B cell (primary cell): ENCODE measurements at regions of chr2 and their contacts with region 1.

Region 1: GRCh38 chr2:176653479-176654443 is 384.5 kb downstream of the MTX2 start:
- DNase-seq: peak; percentile 45
- ATAC-seq: peak; percentile 31
- H3K4me3 ChIP-seq: no peak overlapping the region
- H3K4me3 Mint-ChIP-seq: no peak overlapping the region
- H3K27ac ChIP-seq: no peak overlapping the region
- H3K27ac Mint-ChIP-seq: no peak overlapping the region
- H3K4me1 ChIP-seq: peaks cover 0 to 3% of the 10 kb centered on the region in 2 donors
- H3K4me1 Mint-ChIP-seq: peaks cover 3% of the 10 kb centered on the region
- H3K27me3 ChIP-seq: peaks cover 0 to 7% (median 3%) of the 10 kb centered on the region in 4 experiments
- H3K27me3 Mint-ChIP-seq: peaks cover 42% of the 10 kb centered on the region
- CTCF ChIP-seq: peak; percentile 51

Region 2: DNA sequence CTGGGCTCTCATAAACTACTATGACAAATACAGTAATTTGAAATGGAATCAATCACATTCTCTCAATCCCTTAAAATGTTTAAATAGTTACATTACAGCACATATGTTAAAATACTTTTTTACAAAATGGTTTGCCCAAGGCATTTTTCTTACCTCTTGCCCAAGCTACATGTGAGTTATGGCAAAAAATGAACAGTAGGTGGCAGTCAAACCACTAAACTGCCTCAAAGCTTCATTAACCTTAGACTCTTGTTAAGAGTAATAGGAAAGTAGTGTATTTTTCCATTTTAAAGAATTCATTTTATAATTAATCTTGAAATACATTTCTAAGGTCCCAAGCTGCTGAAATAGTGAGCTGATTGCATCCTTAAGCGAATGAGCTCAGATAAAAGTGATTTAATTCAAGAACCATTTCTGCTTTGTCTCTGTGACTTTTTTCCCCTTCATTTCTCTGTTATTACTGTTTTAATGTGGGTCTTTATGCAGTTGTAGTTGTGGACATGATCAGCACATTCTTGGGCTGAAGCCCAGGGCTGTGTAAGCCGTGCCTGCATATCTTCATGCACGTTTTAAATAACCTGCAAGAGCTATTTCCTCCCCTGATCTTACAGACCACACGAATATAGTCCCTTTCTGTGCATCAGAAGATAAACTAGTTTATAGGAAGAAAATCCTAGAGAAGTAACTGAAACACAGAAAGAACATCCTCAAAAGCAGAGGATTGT is 963.5 kb before region 1 on chr2:
- CTCF ChIA-PET with region 1: no interaction called
- POLR2A ChIA-PET with region 1: no interaction called
- intact Hi-C with region 1: loop called (anchors 5 kb)
- DNase-seq: peak; percentile 48
- ATAC-seq: no peak
- H3K4me3 ChIP-seq: no peak overlapping the region
- H3K4me3 Mint-ChIP-seq: no peak overlapping the region
- H3K27ac ChIP-seq: no peak overlapping the region
- H3K27ac Mint-ChIP-seq: no peak overlapping the region
- H3K4me1 ChIP-seq: no peaks in the 10 kb centered on the region
- H3K4me1 Mint-ChIP-seq: no peaks in the 10 kb centered on the region
- H3K27me3 ChIP-seq: no peaks in the 10 kb centered on the region
- H3K27me3 Mint-ChIP-seq: peaks cover 4% of the 10 kb centered on the region
- CTCF ChIP-seq: peak; percentile 77

Region 3: DNA sequence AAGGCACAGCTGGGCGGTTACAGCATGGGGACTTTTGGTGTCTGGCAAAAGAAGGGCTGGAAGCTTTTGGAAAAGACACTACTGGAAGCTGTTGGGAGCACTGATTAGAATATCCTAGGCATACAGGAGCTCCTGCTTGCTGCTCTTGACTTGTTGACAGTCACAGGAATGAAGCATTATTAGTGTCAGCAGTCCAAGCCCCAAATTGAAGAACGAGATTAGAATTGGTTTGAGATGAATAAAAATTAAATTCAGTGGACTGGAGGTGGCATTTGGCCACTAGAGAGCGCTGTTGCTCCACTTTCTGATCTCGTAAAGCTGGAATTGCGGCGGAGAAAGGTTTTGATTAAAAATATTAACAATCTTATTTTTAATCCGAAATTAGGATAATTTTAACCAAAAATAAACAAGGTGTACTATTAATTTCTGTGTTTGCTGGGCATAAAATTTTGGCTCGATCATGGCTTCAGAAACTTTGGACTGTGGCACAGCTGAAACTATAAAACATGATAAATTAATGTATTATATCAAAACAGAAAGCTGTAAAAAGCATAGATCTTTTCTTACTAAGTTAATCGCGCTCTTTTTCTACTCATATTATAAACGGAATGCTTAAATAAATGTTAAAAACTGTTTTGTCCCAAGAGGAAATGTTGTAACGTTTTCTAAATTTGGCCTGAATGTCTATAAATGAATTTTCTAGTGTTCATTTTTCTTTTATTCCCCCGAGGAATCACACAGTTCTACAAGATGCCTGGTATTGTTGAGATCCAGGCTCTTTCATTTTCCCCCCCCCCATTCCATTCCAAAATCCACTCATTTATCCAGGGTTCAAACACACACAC is 526.6 kb before region 1 on chr2:
- CTCF ChIA-PET with region 1: interaction called, 100 read pairs
- POLR2A ChIA-PET with region 1: no interaction called
- intact Hi-C with region 1: loop called (anchors 1 kb)
- DNase-seq: peak; percentile 75
- ATAC-seq: no peak
- H3K4me3 ChIP-seq: no peak overlapping the region
- H3K4me3 Mint-ChIP-seq: no peak overlapping the region
- H3K27ac ChIP-seq: no peak overlapping the region
- H3K27ac Mint-ChIP-seq: no peak overlapping the region
- H3K4me1 ChIP-seq: peaks cover 24 to 50% of the 10 kb centered on the region in 2 donors
- H3K4me1 Mint-ChIP-seq: peaks cover 26% of the 10 kb centered on the region
- H3K27me3 ChIP-seq: peaks cover 0 to 84% (median 65%) of the 10 kb centered on the region in 4 experiments
- H3K27me3 Mint-ChIP-seq: peaks cover 71% of the 10 kb centered on the region
- CTCF ChIP-seq: peak; percentile 98

Region 4: GRCh38 chr2:176554101-176555048 is 99.4 kb before region 1 on chr2:
- CTCF ChIA-PET with region 1: interaction called, 10 read pairs
- POLR2A ChIA-PET with region 1: no interaction called
- intact Hi-C with region 1: loop called (anchors 5 kb)
- DNase-seq: peak; percentile 72
- ATAC-seq: peak; percentile 57
- H3K4me3 ChIP-seq: peak overlapping the region; percentile 25 to 60 (median 52)
- H3K4me3 Mint-ChIP-seq: peak overlapping the region; percentile 74
- H3K27ac ChIP-seq: no peak overlapping the region
- H3K27ac Mint-ChIP-seq: no peak overlapping the region
- H3K4me1 ChIP-seq: peaks cover 10 to 11% of the 10 kb centered on the region in 2 donors
- H3K4me1 Mint-ChIP-seq: peaks cover 10% of the 10 kb centered on the region
- H3K27me3 ChIP-seq: peaks cover 0 to 22% (median 14%) of the 10 kb centered on the region in 4 experiments
- H3K27me3 Mint-ChIP-seq: peaks cover 49% of the 10 kb centered on the region
- CTCF ChIP-seq: peak; percentile 76

Region 5: DNA sequence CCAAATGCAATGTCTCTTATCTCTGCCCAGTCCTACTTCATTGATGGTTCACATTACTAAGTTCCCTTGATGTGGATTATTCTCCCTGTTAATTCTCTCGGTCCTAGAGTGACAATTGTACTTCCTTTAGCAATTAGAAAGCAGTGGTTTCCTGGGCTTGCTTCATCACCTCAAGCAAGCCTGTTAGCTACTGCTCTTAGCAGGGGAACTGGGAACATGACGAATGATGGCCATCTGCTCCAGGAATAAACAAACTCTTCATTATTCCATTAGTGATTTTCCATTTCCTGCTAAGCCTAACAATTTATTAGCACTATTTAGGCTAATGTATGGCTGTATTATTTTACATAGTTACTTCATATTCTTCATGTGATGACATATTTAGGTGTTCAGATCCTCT is 52.7 kb before region 1 on chr2:
- CTCF ChIA-PET with region 1: no interaction called
- POLR2A ChIA-PET with region 1: no interaction called
- intact Hi-C with region 1: no loop called
- DNase-seq: no peak
- ATAC-seq: no peak
- H3K4me3 ChIP-seq: no peak overlapping the region
- H3K4me3 Mint-ChIP-seq: no peak overlapping the region
- H3K27ac ChIP-seq: no peak overlapping the region
- H3K27ac Mint-ChIP-seq: no peak overlapping the region
- H3K4me1 ChIP-seq: no peaks in the 10 kb centered on the region
- H3K4me1 Mint-ChIP-seq: no peaks in the 10 kb centered on the region
- H3K27me3 ChIP-seq: peaks cover 0 to 13% (median 0%) of the 10 kb centered on the region in 4 experiments
- H3K27me3 Mint-ChIP-seq: peaks cover 29% of the 10 kb centered on the region
- CTCF ChIP-seq: no peak

Region 6: GRCh38 chr2:177148477-177149154 is 494.9 kb after region 1 on chr2:
- CTCF ChIA-PET with region 1: interaction called, 7 read pairs
- POLR2A ChIA-PET with region 1: no interaction called
- intact Hi-C with region 1: loop called (anchors 5 kb)
- DNase-seq: peak; percentile 85
- ATAC-seq: peak; percentile 92
- H3K4me3 ChIP-seq: peak overlapping the region; percentile 42 to 94 (median 67)
- H3K4me3 Mint-ChIP-seq: peak overlapping the region; percentile 92
- H3K27ac ChIP-seq: no peak overlapping the region
- H3K27ac Mint-ChIP-seq: peak overlapping the region; percentile 2
- H3K4me1 ChIP-seq: peaks cover 9 to 13% of the 10 kb centered on the region in 2 donors
- H3K4me1 Mint-ChIP-seq: peaks cover 11% of the 10 kb centered on the region
- H3K27me3 ChIP-seq: peaks cover 0 to 13% (median 10%) of the 10 kb centered on the region in 4 experiments
- H3K27me3 Mint-ChIP-seq: peaks cover 36% of the 10 kb centered on the region
- CTCF ChIP-seq: peak; percentile 99

Region 7: GRCh38 chr2:177929662-177930522 is 1276.1 kb after region 1 on chr2:
- CTCF ChIA-PET with region 1: no interaction called
- POLR2A ChIA-PET with region 1: no interaction called
- intact Hi-C with region 1: no loop called
- DNase-seq: no peak
- ATAC-seq: no peak
- H3K4me3 ChIP-seq: no peak overlapping the region
- H3K4me3 Mint-ChIP-seq: no peak overlapping the region
- H3K27ac ChIP-seq: no peak overlapping the region
- H3K27ac Mint-ChIP-seq: no peak overlapping the region
- H3K4me1 ChIP-seq: no peaks in the 10 kb centered on the region
- H3K4me1 Mint-ChIP-seq: no peaks in the 10 kb centered on the region
- H3K27me3 ChIP-seq: no peaks in the 10 kb centered on the region
- H3K27me3 Mint-ChIP-seq: peaks cover 4% of the 10 kb centered on the region
- CTCF ChIP-seq: no peak